ENCODE measurements at regions of chr6 and their contacts with region 1.

Region 1: GRCh38 chr6:32413427-32414047 is 6.6 kb upstream of the BTNL2 start:
- DNase-seq: peak; percentile 88
- H3K4me3 ChIP-seq: no peak overlapping the region
- H3K27ac ChIP-seq: no peak overlapping the region
- H3K4me1 ChIP-seq: peaks cover 0 to 8% (median 3%) of the 10 kb centered on the region in 4 donors
- H3K27me3 ChIP-seq: peaks cover 9 to 72% (median 13%) of the 10 kb centered on the region in 3 donors
- CTCF ChIP-seq: peak; percentile 74 to 97 (median 84)
- EP300 ChIP-seq: no peak
- POLR2A ChIP-seq: no peak

Region 2: DNA sequence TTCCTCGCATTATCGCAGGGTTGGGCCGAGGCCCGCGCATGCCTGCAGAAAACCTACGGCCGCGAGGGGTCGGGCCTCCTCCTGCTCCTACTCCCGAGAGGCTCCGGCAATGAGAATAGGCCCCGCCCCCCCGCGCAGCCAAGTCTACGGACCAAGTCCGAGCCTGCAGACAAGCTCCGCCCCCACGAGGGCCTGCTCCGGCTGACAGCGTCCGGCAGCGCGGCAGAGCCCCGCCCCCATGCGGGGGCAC is 218.0 kb before region 1 on chr6:
- intact Hi-C with region 1: no loop called
- DNase-seq: peak; percentile 100
- H3K4me3 ChIP-seq: peak overlapping the region; percentile 68 to 91 (median 82)
- H3K27ac ChIP-seq: peak overlapping the region; percentile 93 to 100 (median 100)
- H3K4me1 ChIP-seq: peaks cover 0 to 36% (median 32%) of the 10 kb centered on the region in 4 donors
- H3K27me3 ChIP-seq: no peaks in the 10 kb centered on the region
- CTCF ChIP-seq: peak in 3 of 4 experiments; percentile 15 to 42 (median 26)
- EP300 ChIP-seq: no peak
- POLR2A ChIP-seq: no peak

Region 3: GRCh38 chr6:32244946-32245398 is 168.6 kb before region 1 on chr6:
- intact Hi-C with region 1: loop called (anchors 2 kb)
- DNase-seq: peak; percentile 91
- H3K4me3 ChIP-seq: peak overlapping the region in 2 of 4 donors; percentile 16 to 18
- H3K27ac ChIP-seq: peak overlapping the region; percentile 37 to 67 (median 63)
- H3K4me1 ChIP-seq: peaks cover 0 to 13% (median 10%) of the 10 kb centered on the region in 4 donors
- H3K27me3 ChIP-seq: no peaks in the 10 kb centered on the region
- CTCF ChIP-seq: peak; percentile 84 to 93 (median 93)
- EP300 ChIP-seq: no peak
- POLR2A ChIP-seq: no peak

Region 4: GRCh38 chr6:32700391-32701040 is 287.0 kb after region 1 on chr6:
- intact Hi-C with region 1: loop called (anchors 1 kb)
- DNase-seq: no peak
- H3K4me3 ChIP-seq: no peak overlapping the region
- H3K27ac ChIP-seq: no peak overlapping the region
- H3K4me1 ChIP-seq: no peaks in the 10 kb centered on the region
- H3K27me3 ChIP-seq: peaks cover 0 to 41% (median 0%) of the 10 kb centered on the region in 3 donors
- CTCF ChIP-seq: peak in 3 of 4 experiments; percentile 53 to 64 (median 58)
- EP300 ChIP-seq: no peak
- POLR2A ChIP-seq: no peak

Region 5: DNA sequence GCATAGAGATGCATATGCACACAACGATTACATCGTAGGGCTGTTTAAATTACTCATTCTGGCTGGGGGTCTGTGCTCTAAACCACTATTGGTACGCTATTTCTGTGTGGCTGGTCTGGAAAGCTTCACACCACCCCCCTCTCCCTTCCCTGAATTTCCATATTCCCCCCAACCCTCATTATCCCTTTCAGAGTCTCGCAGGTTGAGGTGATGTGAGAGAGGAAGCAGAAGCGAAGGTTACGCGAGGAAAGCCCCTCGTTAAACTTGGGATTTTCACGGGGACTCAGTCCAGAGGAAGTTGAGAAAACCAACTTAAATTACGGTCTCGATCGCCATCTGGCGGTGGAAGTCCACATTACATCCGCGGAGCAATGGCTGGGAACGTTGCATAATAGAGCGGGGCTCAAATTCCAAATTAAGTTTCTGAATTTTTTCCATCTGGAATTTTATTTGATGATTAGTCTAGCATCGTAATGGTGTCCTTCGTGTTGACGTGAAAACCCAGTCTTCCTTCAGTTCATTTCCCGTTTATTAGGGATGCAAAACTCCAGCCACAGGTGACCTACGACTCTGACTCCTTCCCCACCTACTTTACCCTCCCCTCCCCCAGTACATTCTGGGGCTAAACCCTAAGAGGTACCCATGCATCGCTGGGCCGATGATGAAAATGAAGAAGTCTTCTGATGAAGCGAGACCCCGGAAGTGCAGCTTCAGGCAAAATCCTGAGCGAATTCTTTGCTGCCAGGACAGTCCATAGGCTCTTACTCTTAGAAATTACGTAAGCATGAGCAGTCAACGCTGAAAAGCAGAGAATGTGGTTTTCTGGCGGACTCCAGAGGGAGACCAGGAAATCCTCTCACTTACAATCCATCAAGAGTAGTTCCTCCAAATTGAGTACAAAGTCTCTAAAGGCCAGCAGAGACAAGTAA is 383.6 kb after region 1 on chr6:
- intact Hi-C with region 1: loop called (anchors 2 kb)
- DNase-seq: peak; percentile 77
- H3K4me3 ChIP-seq: peak overlapping the region in 2 of 4 donors; percentile 14 to 23
- H3K27ac ChIP-seq: no peak overlapping the region
- H3K4me1 ChIP-seq: peaks cover 0 to 9% (median 2%) of the 10 kb centered on the region in 4 donors
- H3K27me3 ChIP-seq: peaks cover 0 to 54% (median 0%) of the 10 kb centered on the region in 3 donors
- CTCF ChIP-seq: peak; percentile 62 to 86 (median 84)
- EP300 ChIP-seq: no peak
- POLR2A ChIP-seq: no peak

Region 6: DNA sequence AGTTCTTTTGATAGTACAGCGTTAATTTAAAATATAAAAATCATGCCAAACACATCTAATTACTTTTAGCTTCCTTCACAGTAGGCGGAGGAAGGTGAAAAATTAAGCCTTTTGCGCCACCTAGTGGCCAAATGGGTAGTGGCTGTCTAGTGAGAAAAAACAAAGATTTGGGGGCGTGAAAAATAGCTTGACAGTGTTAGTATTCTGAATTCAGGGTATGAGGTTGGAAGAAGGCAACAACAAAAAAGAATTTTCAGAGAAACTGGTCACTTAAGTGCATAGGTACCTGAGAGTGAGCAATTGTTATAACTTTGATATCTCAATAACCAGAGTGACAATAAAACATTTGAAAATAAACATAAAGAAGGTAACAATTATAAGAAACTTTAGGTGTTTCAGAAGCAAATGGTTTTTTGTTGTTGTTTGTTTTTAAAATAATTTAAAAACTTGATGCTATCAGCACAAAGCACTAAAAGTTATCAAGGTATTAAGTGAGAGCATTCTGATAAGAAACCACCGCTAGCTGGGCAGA is 454.8 kb after region 1 on chr6:
- intact Hi-C with region 1: loop called (anchors 5 kb)
- DNase-seq: peak; percentile 87
- H3K4me3 ChIP-seq: no peak overlapping the region
- H3K27ac ChIP-seq: no peak overlapping the region
- H3K4me1 ChIP-seq: no peaks in the 10 kb centered on the region
- H3K27me3 ChIP-seq: no peaks in the 10 kb centered on the region
- CTCF ChIP-seq: peak; percentile 77 to 95 (median 90)
- EP300 ChIP-seq: no peak
- POLR2A ChIP-seq: no peak

Measured in sigmoid colon (tissue), 7 donors.